ENCODE measurements at regions of chr6 and their contacts with region 1.

Region 1: DNA sequence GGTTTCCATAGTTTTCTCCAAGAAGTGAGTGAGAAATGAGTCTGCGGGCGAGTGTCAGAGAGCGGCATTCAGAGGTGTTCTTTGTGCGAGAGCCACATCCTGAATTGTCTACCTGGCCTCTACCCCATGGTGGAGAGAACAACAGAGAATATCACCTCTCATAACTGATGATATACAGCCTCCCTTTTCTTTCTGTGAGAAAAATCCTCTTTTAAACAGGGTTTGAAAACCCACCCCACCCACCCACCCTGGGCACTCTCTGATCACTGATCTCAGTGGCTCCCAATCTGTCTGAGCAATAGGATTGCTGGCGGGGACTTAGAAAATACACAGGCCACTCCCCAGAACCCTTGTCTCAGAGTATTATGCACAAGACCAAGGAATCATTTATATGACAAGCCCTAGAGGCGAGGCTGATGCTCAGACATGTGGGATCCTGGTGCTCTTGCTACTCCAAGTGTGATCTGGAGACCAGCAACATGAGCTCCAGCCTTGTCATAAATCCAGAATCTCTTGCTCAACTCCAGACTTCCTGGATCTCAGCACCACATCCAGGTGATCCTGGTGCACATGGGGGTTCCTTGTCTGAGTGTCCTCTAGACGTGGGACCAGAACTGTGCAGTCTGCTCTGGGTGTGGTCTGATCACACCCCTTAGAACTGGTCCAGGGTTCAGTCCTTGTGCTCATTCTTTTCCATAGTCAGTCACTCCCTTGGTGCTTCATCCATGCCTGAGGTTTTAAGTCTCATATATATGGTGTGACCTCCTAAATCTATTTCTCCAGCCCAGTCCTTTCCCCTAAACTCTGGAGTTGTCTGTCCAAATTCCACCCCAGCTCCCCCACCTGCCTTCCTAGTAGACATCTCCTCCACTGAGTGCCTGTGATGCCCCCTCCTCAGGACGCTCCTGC is 5.3 kb downstream of the HLA-B start:
- DNase-seq: no peak
- ATAC-seq: no peak

Region 2: GRCh38 chr6:31267651-31268368 is 83.8 kb before region 1 on chr6:
- intact Hi-C with region 1: loop called (anchors 5 kb)
- DNase-seq: no peak
- ATAC-seq: no peak

Region 3: DNA sequence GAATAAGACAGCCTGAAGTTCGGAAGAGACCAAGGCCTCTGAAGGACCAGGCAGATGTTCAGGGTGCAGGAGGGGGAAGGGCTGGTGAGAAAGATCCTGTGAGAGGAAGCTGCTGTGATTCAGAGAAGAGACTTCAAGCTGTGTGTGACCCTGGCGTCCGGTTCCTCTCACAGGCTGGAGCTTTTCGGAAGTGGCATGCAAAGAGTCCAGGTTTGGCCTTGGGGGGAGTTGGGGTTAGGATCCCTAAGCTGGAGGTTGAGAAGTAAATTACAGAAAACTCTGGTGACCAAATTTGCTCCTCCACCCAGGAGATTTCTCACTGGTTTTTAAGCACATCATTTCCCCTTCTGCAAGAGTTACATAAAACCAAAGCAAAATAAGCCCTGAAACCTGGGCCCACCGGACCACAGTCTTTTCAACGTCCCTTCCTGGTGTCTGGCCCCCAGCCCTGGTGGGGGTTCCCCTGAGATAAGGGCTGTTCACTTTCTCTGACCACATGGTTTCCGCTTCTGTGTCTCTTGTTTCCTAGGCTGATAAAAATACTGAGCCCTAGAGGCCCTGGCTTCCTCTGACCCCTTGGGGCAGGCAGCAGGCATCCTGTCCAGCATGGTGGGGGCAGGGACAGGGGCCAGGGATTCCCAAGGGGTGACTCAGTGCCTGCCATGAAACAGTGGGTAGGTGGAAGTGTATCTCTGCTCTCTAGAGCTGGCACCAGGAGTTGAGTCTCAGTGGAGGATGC is 208.5 kb after region 1 on chr6:
- intact Hi-C with region 1: no loop called
- DNase-seq: peak; percentile 80
- ATAC-seq: peak; percentile 74

Measured in Right ventricle myocardium superior (tissue), 1 donor.